MCF 10A (cell line): ENCODE measurements at regions of chr1 and their contacts with region 1.

Region 1: GRCh38 chr1:155934097-155934935 is at the start of gene KHDC4:
- DNase-seq: peak; percentile 100
- H3K4me3 Mint-ChIP-seq: no peak within 1 kb of the TSS
- H3K27ac Mint-ChIP-seq: no peak within 1 kb of the TSS
- H3K4me1 Mint-ChIP-seq: peaks cover 33% of the 10 kb centered on the region
- H3K27me3 Mint-ChIP-seq: no peaks in the 10 kb centered on the region
- CTCF ChIP-seq: no peak
- total RNA-seq, gene KHDC4: 90.9 and 104 TPM in 2 replicates

Region 2: GRCh38 chr1:155698382-155699038 is 235.8 kb before region 1 on chr1:
- CTCF ChIA-PET with region 1: no interaction called
- POLR2A ChIA-PET with region 1: no interaction called
- intact Hi-C with region 1: no loop called
- DNase-seq: no peak
- H3K4me3 Mint-ChIP-seq: no peak overlapping the region
- H3K27ac Mint-ChIP-seq: peak overlapping the region; percentile 24
- H3K4me1 Mint-ChIP-seq: peaks cover 46% of the 10 kb centered on the region
- H3K27me3 Mint-ChIP-seq: no peaks in the 10 kb centered on the region
- CTCF ChIP-seq: no peak

Region 3: GRCh38 chr1:155911156-155912055 is 22.9 kb before region 1 on chr1 and contains the start of gene RIT1:
- CTCF ChIA-PET with region 1: interaction called, 7 read pairs
- POLR2A ChIA-PET with region 1: interaction called, 203 read pairs
- intact Hi-C with region 1: no loop called
- DNase-seq: peak; percentile 88
- H3K4me3 Mint-ChIP-seq: peak within 1 kb of the TSS; percentile 87
- H3K27ac Mint-ChIP-seq: peak within 1 kb of the TSS; percentile 96
- H3K4me1 Mint-ChIP-seq: peaks cover 20% of the 10 kb centered on the region
- H3K27me3 Mint-ChIP-seq: no peaks in the 10 kb centered on the region
- CTCF ChIP-seq: no peak
- total RNA-seq, gene RIT1: 36.2 and 43.1 TPM in 2 replicates

Region 4: DNA sequence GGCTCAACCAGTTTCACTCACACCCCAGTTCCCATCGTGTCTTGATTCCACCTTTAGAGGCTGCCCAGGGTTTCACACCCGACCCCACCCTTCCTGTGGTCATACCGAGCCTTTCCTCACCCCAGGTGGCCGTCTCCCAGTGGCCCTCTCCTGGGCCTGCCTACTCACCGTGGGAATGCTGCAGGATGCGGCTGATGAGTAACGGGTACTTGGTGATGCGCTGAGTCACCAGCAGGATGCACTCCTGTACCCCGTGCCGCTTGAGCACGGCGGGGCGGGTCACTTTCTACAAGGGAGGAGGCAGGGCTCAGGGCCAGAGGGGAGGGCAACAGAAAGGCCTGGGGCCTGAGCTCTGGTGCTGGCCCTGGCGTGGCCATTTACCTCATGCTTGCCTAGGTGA is 27.6 kb after region 1 on chr1:
- CTCF ChIA-PET with region 1: interaction called, 21 read pairs
- POLR2A ChIA-PET with region 1: interaction called, 67 read pairs
- intact Hi-C with region 1: loop called (anchors 2 kb)
- DNase-seq: peak; percentile 100
- H3K4me3 Mint-ChIP-seq: peak overlapping the region; percentile 75
- H3K27ac Mint-ChIP-seq: peak overlapping the region; percentile 98
- H3K4me1 Mint-ChIP-seq: peaks cover 40% of the 10 kb centered on the region
- H3K27me3 Mint-ChIP-seq: no peaks in the 10 kb centered on the region
- CTCF ChIP-seq: peak; percentile 42

Region 5: GRCh38 chr1:156001682-156002171 is 67.4 kb after region 1 on chr1:
- CTCF ChIA-PET with region 1: interaction called, 175 read pairs
- POLR2A ChIA-PET with region 1: interaction called, 61 read pairs
- intact Hi-C with region 1: no loop called
- DNase-seq: no peak
- H3K4me3 Mint-ChIP-seq: peak overlapping the region; percentile 74
- H3K27ac Mint-ChIP-seq: peak overlapping the region; percentile 94
- H3K4me1 Mint-ChIP-seq: peaks cover 38% of the 10 kb centered on the region
- H3K27me3 Mint-ChIP-seq: no peaks in the 10 kb centered on the region
- CTCF ChIP-seq: peak; percentile 14

Region 6: GRCh38 chr1:156065212-156065611 is 130.9 kb after region 1 on chr1:
- CTCF ChIA-PET with region 1: interaction called, 24 read pairs
- POLR2A ChIA-PET with region 1: interaction called, 6 read pairs
- intact Hi-C with region 1: loop called (anchors 1 kb)
- DNase-seq: no peak
- H3K4me3 Mint-ChIP-seq: no peak overlapping the region
- H3K27ac Mint-ChIP-seq: no peak overlapping the region
- H3K4me1 Mint-ChIP-seq: peaks cover 19% of the 10 kb centered on the region
- H3K27me3 Mint-ChIP-seq: no peaks in the 10 kb centered on the region
- CTCF ChIP-seq: no peak

Region 7: DNA sequence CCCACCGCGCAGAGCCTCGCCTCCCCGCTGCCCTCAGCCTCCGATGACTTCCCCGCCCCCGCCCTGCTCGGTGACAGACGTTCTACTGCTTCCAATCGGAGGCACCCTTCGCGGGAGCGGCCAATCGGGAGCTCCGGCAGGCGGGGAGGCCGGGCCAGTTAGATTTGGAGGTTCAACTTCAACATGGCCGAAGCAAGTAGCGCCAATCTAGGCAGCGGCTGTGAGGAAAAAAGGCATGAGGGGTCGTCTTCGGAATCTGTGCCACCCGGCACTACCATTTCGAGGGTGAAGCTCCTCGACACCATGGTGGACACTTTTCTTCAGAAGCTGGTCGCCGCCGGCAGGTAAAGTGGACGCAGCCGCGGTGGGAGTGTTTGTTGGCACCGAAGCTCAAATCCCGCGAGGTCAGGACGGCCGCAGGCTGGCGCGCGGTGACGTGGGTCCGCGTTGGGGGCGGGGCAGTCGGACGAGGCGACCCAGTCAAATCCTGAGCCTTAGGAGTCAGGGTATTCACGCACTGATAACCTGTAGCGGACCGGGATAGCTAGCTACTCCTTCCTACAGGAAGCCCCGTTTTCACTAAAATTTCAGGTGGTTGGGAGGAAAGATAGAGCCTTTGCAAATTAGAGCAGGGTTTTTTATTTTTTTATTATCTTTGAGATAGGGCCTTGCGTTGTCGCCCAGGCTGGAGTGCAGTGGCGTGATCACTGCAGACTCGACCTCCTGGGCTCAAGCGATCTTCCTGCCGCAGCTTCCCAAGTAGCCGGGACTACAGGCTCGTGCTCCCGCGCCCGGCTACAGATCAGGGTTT is 278.7 kb after region 1 on chr1 and contains the start of gene PMF1:
- CTCF ChIA-PET with region 1: no interaction called
- POLR2A ChIA-PET with region 1: interaction called, 15 read pairs
- intact Hi-C with region 1: no loop called
- DNase-seq: peak; percentile 99
- H3K4me3 Mint-ChIP-seq: peak within 1 kb of the TSS; percentile 97
- H3K27ac Mint-ChIP-seq: peak within 1 kb of the TSS; percentile 96
- H3K4me1 Mint-ChIP-seq: peaks cover 21% of the 10 kb centered on the region
- H3K27me3 Mint-ChIP-seq: no peaks in the 10 kb centered on the region
- CTCF ChIP-seq: no peak
- total RNA-seq, gene PMF1: 51.0 and 77.7 TPM in 2 replicates